ENCODE measurements at regions of chr4 and their contacts with region 1.

Region 1: DNA sequence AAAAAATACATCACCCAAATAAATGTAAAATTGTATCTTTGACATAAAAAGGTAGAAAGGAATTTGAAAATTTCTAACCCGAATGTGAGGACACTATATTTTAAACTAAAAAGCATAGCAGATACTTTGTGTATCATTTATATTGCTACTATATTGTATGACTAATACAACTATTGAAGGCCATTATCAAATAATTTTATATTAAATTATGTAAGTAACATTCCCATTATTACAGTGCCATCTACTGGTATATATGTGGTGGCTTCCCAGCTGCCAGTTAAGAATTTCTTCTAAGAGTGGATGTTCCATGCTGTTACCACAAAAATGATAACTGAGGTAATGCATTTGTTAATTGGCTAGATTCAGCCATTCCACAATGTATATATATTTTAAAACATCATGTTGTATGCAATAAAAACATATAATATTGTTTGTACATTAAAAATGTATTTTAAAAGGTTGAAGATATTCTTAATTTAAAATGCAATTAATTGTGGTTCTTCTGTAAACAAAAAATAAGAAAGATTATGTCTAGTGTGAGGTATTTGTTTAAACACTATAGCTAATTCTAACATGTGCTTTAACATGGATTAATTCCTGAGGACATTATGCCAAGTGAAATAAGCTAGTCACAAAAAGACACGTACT is 65.3 kb downstream of the EGF start:
- DNase-seq: no peak

Region 2: DNA sequence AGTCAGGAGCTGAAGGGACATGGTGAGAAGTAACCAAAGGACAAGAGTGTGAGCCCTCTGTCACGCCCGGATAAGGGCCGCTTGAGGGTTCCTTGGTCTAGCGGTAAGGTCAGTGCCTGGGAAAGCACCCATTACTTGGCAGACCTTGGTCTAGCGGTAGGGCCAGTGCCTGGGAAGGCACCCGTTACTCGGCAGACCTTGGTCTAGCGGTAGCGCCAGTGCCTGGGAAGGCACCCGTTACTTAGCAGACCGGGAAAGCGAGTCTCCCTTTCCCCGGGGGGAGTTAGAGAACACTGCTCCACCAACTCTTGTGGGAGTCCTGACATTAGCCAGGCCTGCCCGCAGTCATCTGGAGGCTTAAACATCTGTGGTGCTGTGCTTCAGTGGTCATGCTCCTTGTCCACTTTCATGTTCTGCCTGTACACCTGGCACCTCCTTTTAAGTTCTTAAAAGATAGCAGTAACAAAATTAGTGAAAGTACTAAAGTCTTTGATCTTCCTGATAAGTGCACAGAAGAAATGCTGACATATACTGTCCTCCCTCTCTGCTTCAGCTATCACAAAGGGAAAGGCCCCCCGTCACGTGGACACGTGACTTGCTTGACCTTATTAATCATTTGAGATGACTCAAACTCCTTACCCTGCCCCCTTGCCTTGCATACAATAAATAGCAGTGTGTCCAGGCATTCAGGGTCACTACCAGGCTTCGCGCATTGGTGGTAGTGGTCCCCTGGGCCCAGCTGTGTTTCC is 553.7 kb before region 1 on chr4:
- intact Hi-C with region 1: loop called (anchors 1 kb)
- DNase-seq: no peak

Region 3: GRCh38 chr4:109702950-109703663 is 274.9 kb before region 1 on chr4 and contains the start of gene CASP6:
- intact Hi-C with region 1: loop called (anchors 10 kb)
- DNase-seq: peak; percentile 57 to 96 (median 74)

Region 4: DNA sequence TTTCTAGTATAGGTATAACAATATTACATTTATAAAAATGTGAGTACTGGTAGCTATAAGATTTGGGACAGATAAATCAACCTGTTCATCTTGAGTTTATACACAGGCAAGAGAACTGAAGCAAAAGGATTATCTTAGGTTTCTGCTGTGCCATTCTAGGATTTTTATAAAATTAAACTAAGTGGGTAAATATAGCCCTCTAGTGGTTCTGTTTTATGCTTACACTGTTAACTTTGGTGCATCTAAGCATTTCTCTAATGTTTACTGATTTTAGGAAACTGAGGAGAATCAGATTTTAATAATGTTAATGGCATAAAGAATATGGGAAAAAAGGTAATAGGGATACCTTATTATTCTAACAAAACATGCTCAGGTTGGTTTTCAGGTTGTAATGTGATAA is 151.3 kb before region 1 on chr4:
- intact Hi-C with region 1: loop called (anchors 10 kb)
- DNase-seq: no peak

Region 5: GRCh38 chr4:110119337-110119736 is 141.4 kb after region 1 on chr4:
- intact Hi-C with region 1: no loop called
- DNase-seq: no peak

Measured in posterior cingulate gyrus (tissue), 11 donors.